HepG2 (cell line): ENCODE measurements at regions of chr6 and their contacts with region 1.

Region 1: DNA sequence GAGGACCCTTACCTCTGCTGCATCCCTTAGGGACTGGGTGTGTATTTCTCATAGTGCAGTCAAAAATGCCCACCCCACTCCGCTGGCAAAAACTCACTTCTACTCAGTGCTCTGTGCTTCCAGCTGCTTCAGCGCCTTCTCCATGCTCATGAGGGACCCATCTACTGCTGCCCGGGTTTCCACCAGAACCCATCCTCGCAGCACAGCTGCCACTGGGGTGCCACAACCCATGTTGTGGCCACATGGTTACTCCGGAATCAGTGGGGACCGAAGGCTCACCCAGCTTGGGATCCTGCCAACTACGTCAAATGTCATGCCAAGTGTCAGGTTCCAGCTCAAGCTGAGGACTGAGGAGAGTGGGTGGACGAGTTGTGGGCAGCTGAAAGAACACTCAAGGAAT is 774.2 kb upstream of the EYS start:
- DNase-seq: no peak
- ATAC-seq: no peak
- H3K4me3 ChIP-seq: no peak overlapping the region
- H3K27ac ChIP-seq: no peak overlapping the region
- H3K4me1 ChIP-seq: no peaks in the 10 kb centered on the region
- H3K27me3 ChIP-seq: no peaks in the 10 kb centered on the region
- CTCF ChIP-seq: no peak
- EP300 ChIP-seq: no peak
- POLR2A ChIP-seq: no peak
- RAD21 ChIP-seq: no peak

Region 2: DNA sequence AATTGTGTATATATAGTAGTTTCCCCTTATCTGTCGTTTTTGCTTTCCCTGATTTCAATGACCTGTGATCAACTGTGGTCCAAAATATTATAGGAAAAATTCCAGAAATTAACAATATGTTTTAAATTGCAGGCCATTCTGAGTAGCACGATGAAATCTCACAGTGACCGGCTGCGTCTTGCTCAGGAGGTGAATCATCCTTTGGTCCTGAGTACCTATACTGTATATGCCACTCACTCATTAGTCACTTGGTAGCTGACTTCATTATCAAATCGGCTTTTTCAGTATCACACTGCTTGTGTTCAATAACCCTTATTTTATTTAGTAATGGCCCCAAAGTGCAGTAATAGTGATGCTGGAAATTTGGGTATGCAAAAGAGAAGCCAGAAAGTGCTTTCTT is 45.9 kb before region 1 on chr6:
- CTCF ChIA-PET with region 1: no interaction called
- POLR2A ChIA-PET with region 1: no interaction called
- in situ Hi-C with region 1: no loop called
- intact Hi-C with region 1: loop called (anchors 1 kb)
- DNase-seq: no peak
- ATAC-seq: no peak
- H3K4me3 ChIP-seq: no peak overlapping the region
- H3K27ac ChIP-seq: no peak overlapping the region
- H3K4me1 ChIP-seq: no peaks in the 10 kb centered on the region
- H3K27me3 ChIP-seq: no peaks in the 10 kb centered on the region
- CTCF ChIP-seq: no peak
- EP300 ChIP-seq: no peak
- POLR2A ChIP-seq: no peak
- RAD21 ChIP-seq: no peak